AG04449 (cell line): ENCODE measurements at regions of chr14 and their contacts with region 1.

Region 1: DNA sequence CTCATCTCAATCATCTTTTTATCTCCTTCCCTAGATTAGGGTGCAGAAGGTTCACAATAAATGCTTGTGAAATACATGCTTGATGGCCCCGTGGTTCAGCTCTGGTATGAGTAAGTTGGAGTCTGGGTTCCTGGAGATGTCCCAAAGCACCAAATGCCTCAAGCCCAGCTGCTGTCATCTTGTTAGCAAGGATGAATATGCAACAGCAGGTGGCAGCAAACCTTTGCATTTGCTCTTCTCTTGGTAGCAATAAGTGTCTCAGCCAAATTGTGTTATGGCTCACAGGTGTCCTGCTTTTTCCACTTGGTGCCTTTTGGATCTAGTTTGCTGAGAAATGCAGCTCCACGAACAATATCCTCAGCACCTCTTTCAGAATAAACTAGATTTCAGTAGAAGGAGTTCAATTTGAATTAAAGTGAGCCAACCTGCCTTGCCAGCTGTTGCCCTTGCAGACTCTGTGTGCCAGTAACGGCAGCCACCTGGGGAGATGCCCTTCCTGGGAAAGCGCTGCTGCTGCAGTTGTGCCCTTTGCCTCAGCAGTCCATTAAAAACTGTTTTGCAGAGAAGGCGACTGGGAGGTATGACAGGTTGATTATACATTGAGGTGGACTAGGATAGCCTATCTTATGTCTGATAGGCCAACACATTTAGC is 417.3 kb downstream of the SNAPC1 start:
- DNase-seq: peak; percentile 68
- H3K4me3 ChIP-seq: no peak overlapping the region
- CTCF ChIP-seq: peak; percentile 76

Region 2: DNA sequence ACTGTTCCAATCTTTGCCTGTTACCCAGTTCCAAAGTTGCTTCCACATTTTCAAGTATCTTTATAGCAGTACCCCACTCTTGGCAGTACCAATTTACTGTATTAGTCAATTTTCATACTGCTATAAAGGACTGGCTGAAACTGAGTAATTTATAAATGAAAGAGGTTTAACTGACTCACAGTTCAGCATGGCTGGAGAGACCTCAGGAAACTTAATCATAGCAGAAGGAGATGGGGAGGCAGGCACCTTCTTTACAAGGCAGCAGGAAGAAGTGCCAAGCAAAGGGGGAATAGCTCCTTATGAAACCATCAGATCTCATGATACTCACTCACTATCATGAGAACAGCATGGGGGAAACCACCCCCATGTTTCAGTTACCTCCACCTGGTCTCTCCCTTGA is 202.3 kb before region 1 on chr14:
- CTCF ChIA-PET with region 1: no interaction called
- POLR2A ChIA-PET with region 1: no interaction called
- DNase-seq: no peak
- H3K4me3 ChIP-seq: no peak overlapping the region
- CTCF ChIP-seq: no peak

Region 3: DNA sequence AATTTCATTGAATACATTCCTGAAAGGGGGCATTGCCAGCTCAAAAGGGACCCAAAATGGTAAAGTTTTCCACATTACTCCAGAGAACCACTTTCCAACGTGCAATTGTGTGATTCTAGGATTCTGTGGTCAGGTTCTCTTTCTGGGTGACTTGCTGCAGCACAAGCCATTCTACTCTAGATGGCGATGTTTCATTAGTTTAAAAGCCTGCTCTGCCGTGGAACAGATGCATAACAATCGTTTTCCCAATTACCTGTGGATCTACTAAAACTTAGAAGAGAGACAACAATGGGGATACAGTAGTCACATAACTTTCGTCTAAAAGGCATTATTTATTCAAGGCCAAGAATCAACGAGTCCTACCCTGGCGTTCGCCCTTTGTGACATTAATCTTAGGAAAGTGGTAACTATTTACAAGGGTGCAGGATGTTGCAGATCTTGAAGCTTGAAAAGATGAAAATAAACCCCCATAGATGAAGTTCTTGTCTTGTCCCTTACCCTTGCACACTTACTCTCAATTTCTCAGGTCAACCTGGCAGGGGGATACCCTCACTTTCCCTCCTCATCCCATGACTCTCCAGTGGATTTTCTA is 16.4 kb before region 1 on chr14:
- CTCF ChIA-PET with region 1: interaction called, 11 read pairs
- POLR2A ChIA-PET with region 1: no interaction called
- DNase-seq: no peak
- H3K4me3 ChIP-seq: no peak overlapping the region
- CTCF ChIP-seq: peak; percentile 65

Region 4: DNA sequence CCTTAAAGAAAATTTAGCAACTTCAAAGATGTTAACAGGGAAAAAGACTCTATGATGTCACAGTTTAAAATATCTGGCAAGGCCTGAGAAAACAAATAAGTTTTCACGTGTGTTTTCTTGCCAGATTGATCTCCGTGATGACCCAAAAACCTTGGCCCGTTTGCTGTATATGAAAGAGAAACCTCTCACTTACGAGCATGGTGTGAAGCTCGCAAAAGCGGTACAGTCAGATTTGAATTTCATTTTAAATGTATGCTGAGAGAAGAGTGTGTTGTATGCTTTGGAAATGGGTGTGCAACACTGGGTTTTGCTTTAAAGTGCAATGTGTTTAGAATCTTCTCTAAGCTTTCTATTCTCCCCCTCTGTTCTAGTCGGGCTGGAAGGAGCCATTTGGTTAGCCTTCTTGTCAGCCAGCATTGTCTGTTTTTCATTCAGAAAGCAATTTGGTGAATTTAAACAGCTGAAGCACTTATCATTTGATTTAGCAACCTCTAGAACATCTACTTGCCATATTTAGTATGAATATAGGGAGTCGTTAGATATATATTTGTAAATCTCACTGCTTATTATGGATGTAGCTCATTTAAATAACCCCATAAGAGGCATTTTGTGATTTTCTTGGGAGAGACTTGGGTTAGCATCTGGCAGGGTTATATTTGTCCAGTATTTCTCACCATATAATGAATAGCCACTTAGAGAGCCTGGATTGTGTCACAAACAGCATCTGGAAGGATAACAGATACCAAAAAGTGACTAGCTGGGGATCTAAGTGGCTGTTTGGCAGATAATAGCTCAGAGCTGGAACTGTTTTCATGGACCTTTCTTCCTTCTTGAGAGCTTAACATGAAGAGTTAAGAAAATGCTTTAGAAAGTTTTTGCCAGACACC is 1103.7 kb after region 1 on chr14:
- CTCF ChIA-PET with region 1: interaction called, 64 read pairs
- POLR2A ChIA-PET with region 1: no interaction called
- DNase-seq: no peak
- H3K4me3 ChIP-seq: no peak overlapping the region
- CTCF ChIP-seq: no peak